PC-3 (cell line): ENCODE measurements at regions of chr19 and their contacts with region 1.

Region 1: GRCh38 chr19:54463531-54464043 is at the start of gene LENG9:
- DNase-seq: peak; percentile 99
- ATAC-seq: peak; percentile 56
- H3K4me3 ChIP-seq: peak within 1 kb of the TSS; percentile 75
- H3K27ac ChIP-seq: peak within 1 kb of the TSS; percentile 87
- H3K4me1 ChIP-seq: peaks cover 16% of the 10 kb centered on the region
- H3K27me3 ChIP-seq: no peaks in the 10 kb centered on the region
- CTCF ChIP-seq: no peak
- total RNA-seq, gene LENG9: 7.1 and 12.6 TPM in 2 replicates

Region 2: DNA sequence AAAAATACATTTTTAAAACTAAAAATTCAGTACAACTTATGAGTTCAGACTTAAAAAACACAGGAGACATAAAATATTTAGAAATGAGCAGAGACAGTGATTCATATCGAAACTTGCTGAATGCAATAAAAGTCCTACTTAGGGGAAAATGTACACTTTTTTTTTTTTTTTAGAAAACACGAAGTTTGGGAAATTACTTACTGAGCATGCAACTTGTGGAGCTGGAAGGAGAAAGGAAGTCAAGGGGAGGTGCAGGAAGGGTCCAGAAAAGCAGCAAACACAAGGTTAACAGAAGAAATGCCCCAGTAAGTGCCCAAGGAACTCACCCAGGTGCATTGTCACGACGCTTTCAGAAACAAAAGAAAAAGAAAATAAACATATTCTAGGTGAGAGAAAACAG is 80.3 kb before region 1 on chr19:
- CTCF ChIA-PET with region 1: no interaction called
- POLR2A ChIA-PET with region 1: no interaction called
- intact Hi-C with region 1: no loop called
- DNase-seq: no peak
- ATAC-seq: no peak
- H3K4me3 ChIP-seq: no peak overlapping the region
- H3K27ac ChIP-seq: no peak overlapping the region
- H3K4me1 ChIP-seq: peaks cover 3% of the 10 kb centered on the region; the same call in 1 of the 2 replicates
- H3K27me3 ChIP-seq: peaks cover 69% of the 10 kb centered on the region
- CTCF ChIP-seq: no peak

Region 3: DNA sequence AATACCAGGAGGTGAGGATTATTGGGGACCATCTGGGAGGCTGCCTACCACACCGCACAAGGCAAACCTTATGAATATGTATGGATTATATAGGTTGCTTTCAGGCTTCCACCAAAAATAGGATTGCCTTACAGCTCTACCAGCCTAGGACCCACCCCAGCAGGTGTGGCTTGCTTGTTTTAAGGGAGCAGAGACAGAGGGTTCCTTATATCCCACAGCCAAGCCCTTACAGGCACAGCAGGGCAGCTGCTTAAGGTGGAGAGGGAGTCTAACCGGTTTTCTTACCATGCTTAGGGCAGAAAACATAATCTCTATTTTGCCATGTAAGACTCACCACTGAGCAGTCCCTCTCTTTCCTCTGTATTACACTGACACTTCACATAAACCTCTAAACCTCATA is 64.4 kb before region 1 on chr19:
- CTCF ChIA-PET with region 1: no interaction called
- POLR2A ChIA-PET with region 1: no interaction called
- intact Hi-C with region 1: no loop called
- DNase-seq: peak; percentile 43
- ATAC-seq: peak; percentile 54
- H3K4me3 ChIP-seq: no peak overlapping the region
- H3K27ac ChIP-seq: no peak overlapping the region
- H3K4me1 ChIP-seq: no peaks in the 10 kb centered on the region
- H3K27me3 ChIP-seq: peaks cover 5% of the 10 kb centered on the region; the same call in 1 of the 2 replicates
- CTCF ChIP-seq: no peak

Region 4: DNA sequence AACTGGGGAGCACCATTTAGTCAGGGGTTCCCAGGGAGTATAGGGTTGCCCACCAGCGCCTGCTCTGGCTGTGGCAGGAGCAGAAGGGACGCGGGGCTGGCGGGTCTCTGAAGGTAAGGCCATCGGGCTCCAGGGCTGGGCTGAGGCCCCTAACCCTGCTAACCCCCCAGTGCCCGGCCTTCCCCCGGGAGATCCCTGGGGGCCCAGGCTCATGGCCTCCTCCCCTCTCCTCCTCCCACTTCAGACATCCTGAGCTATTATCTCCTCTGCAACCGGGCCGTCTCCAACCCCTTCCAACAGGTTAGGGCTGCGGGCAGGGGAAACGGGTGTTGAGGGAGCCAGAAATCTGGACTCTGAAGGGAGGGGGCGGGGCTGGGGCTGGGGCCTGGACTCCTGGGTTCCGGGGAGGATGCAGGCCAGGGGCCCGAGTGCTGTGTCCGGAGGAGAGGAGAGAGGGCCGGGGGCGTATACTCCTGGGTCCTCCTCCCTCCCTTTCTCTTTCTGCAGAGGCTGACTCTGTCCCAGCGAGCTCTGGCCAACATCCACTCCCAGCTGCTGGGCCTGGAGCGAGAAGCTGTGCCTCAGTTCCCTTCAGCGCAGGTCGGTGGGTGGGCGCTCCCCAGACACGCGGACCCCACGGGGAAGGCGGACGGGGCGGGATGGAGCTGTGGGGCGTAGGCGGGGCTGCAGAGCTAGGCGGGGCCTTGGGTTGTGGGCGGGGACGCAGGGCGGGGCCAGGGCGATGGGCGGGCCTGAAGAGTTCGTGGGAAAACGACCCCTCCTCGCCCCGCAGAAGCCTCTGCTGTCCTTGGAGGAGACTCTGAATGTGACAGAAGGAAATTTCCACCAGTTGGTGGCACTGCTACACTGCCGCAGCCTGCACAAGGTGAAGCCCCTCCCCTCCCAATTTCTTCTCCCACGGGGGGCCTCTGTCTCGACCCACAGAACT is 33.0 kb before region 1 on chr19:
- CTCF ChIA-PET with region 1: interaction called, 7 read pairs
- POLR2A ChIA-PET with region 1: no interaction called
- intact Hi-C with region 1: loop called (anchors 2 kb)
- DNase-seq: peak; percentile 74
- ATAC-seq: peak; percentile 55
- H3K4me3 ChIP-seq: peak overlapping the region; percentile 66
- H3K27ac ChIP-seq: peak overlapping the region; percentile 89
- H3K4me1 ChIP-seq: peaks cover 34% of the 10 kb centered on the region
- H3K27me3 ChIP-seq: no peaks in the 10 kb centered on the region
- CTCF ChIP-seq: peak; percentile 53